ENCODE measurements at regions of chr6 and their contacts with region 1.

Region 1: DNA sequence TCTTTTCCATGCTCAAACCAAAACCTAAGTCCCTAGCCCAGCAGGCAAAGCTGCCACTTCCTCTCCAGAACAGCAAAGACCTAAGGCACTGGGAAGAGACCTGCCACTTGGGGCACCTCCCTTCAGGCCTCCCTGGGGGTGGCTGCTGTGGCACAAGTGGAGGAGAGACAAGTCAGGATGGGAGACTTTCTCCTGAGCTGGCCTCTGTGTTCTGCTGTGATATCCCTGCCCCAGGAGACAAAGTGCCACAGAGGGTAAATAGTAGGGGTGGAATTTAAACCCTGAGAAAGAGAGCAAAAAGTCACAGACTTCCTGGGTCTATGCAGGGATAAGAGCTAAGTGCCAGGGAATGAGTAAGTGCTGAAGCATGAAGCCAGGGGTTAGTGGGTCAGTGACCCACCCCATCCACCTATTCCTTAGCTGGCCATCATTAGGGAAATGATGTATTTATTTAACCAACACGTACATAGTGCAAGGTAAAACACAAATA is 84.2 kb downstream of the MRPL14 start:
- DNase-seq: peak; percentile 90
- ATAC-seq: peak; percentile 65
- H3K4me3 ChIP-seq: no peak overlapping the region
- H3K27ac ChIP-seq: peak overlapping the region; percentile 100
- H3K4me1 ChIP-seq: peaks cover 82% of the 10 kb centered on the region
- H3K27me3 ChIP-seq: no peaks in the 10 kb centered on the region
- CTCF ChIP-seq: no peak

Region 2: DNA sequence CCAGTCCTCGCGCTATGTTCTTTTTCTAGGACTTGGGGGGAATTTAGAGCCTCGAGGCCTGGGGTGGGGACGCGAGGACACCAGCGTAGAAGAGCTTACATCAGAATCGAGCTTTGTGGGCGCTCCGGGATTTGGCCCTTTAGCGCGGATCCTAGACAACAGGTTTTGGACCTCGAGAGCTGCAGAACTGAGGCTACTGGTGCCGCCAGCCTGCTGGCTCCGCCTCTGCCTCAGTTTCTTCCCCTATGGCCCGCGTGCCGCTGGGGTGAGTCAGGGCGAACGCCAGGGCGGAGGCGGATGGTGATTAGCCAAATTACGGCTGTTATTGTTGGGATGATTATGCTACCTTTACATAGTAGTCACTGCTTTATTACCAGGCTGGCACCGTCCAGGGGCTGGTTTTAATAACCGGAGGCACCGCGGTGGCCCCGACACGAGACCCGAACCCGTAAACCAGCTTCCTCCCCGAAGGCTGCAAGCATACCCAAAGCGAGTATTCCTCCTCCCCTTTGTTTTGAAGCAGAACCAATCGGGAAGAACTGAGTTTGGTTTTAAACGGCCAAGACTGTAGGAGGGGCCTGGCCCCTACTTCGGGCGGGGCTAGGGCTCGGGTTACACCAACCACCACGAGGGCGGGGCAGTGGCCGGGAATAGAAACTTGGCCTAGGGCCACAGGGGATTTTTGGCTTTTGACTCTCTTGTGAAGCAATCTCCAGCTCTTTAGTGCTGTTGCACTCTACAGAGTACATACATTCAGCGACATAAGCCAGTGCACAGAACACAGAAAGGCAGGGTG is 413.3 kb before region 1 on chr6:
- CTCF ChIA-PET with region 1: no interaction called
- POLR2A ChIA-PET with region 1: interaction called, 11 read pairs
- intact Hi-C with region 1: no loop called
- DNase-seq: peak; percentile 98
- ATAC-seq: peak; percentile 75
- H3K4me3 ChIP-seq: peak overlapping the region; percentile 76
- H3K27ac ChIP-seq: peak overlapping the region; percentile 85
- H3K4me1 ChIP-seq: peaks cover 27% of the 10 kb centered on the region
- H3K27me3 ChIP-seq: no peaks in the 10 kb centered on the region
- CTCF ChIP-seq: no peak

Region 3: DNA sequence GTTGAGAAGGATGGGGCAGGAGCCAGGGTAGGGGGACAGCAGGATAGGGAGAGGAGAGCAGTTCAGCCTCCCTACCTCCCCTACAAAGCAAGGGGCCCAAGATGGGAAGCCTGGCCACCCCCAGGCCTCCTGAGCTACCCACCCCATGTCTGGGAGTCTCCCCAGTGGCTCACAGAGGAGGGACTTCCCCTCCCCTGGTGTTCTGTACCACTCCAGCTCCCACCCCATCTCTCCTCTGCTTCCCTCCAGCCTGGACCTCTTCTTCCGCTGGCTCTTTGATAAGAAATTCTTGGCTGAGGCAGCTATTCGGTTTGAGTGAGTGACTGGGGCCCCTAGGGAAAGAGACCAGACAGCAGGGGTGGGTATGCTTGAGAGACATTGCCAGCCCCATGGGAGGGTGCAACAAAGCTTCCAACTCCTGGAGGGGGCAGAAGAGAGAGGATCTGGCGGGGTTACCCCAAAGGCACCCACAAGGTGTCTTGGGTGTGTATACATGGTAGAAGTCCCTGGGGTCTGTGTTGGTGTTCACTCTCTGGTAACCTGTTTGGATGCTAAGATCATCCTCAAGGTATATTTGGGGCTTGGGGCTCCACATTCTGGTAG is 107.4 kb after region 1 on chr6:
- CTCF ChIA-PET with region 1: no interaction called
- POLR2A ChIA-PET with region 1: no interaction called
- intact Hi-C with region 1: no loop called
- DNase-seq: no peak
- ATAC-seq: no peak
- H3K4me3 ChIP-seq: no peak overlapping the region
- H3K27ac ChIP-seq: no peak overlapping the region
- H3K4me1 ChIP-seq: no peaks in the 10 kb centered on the region
- H3K27me3 ChIP-seq: no peaks in the 10 kb centered on the region
- CTCF ChIP-seq: no peak

Measured in PC-3 (cell line).